Ascending aorta (tissue), 2 donors: ENCODE measurements at regions of chr4 and their contacts with region 1.

Region 1: GRCh38 chr4:123832173-123833026 is 435.8 kb downstream of the SPRY1 start:
- DNase-seq: peak in 1 of 2 donors; percentile 82
- H3K4me3 ChIP-seq: no peak overlapping the region
- H3K27ac ChIP-seq: peak overlapping the region; percentile 56 to 76
- H3K4me1 ChIP-seq: peaks cover 3 to 19% of the 10 kb centered on the region in 2 donors
- H3K27me3 ChIP-seq: no peaks in the 10 kb centered on the region
- CTCF ChIP-seq: no peak

Region 2: DNA sequence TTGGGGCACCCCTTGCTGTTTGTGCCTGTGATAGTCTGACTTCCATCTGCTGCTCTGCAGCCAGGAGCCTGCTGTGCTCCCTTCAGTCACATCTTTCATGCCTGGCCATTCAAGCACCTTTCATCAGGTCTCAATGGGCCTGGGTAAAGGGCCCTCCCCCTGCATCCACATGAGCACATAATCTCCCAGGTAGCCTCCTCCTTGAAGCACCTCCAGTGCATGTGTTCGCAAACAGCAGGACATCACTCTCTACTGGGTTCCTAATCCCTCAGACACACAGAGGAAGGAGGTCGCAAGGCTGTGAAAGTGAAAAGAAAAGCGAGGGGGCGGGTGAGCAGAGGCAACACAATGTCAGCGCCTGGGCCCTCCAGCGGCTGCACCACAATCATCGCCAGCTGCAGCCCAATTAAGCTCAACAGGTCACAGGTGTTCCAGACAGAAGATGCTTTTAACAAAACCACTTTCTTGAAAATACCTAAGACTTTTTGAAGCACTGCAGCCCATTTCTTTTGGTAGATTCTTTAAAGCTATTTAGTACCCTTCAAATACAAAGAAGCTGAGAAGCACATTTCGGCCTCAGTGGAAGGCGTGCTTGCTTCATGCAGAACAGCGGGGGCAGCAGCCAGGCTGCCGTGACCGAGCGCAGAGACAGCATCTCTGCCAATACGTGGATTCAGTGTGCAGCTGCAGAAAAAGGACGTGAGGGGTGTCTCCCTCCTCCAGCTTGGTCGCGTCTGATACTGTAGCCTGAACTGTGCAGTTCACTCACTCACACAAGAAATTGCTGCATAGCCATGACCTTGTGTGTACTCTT is 528.0 kb before region 1 on chr4:
- intact Hi-C with region 1: no loop called
- DNase-seq: no peak
- H3K4me3 ChIP-seq: no peak overlapping the region
- H3K27ac ChIP-seq: no peak overlapping the region
- H3K4me1 ChIP-seq: peaks cover 0 to 2% of the 10 kb centered on the region in 2 donors
- H3K27me3 ChIP-seq: no peaks in the 10 kb centered on the region
- CTCF ChIP-seq: no peak

Region 3: DNA sequence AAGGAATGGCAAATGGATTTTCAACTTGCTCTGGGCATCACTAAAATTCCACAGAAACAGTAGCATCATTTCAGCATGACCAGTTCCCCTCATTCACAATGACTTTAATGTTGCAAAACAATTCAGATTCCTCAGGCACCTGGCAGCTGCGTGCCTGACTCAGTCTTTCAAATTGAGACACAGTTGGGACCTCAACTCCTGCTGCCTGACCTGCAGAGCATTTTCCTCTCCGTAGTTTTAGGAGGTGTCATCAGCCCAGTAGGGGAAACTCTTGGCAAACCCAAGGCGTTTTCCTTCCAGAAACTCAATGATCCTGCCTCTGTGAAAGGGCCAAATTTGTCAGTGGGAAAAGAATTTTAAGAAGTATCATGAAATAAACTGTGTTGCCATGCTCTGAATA is 46.9 kb before region 1 on chr4:
- intact Hi-C with region 1: loop called (anchors 2 kb)
- DNase-seq: peak in 1 of 2 donors; percentile 91
- H3K4me3 ChIP-seq: no peak overlapping the region
- H3K27ac ChIP-seq: peak overlapping the region; percentile 71 to 72
- H3K4me1 ChIP-seq: peaks cover 7 to 26% of the 10 kb centered on the region in 2 donors
- H3K27me3 ChIP-seq: no peaks in the 10 kb centered on the region
- CTCF ChIP-seq: no peak

Region 4: DNA sequence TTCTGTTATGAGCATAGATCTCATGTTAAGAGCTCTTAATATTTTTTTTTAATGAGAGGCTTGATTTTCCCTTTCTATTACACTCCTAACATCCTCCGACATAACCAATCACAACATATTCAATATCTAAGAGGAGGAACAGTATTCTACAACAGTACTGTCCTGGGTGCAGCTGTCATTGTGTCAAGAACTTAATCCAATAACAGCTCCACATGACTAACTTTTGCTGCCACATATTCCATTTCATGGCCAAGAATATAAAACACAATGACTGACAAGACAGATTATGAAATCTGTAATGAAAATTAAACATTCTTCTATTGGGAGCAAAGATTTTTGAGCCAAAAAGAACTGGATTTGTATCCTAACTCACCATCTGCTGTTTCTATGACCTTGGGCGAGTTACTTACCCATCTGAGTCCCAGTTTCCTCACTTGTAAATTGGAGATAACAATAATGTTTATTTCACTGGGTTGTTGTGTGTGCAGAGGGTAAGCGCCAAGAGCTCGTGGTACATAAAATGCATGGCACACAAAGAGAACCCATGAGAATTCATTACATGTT is 30.2 kb before region 1 on chr4:
- intact Hi-C with region 1: no loop called
- DNase-seq: no peak
- H3K4me3 ChIP-seq: no peak overlapping the region
- H3K27ac ChIP-seq: no peak overlapping the region
- H3K4me1 ChIP-seq: no peaks in the 10 kb centered on the region
- H3K27me3 ChIP-seq: no peaks in the 10 kb centered on the region
- CTCF ChIP-seq: no peak